AG04450 (cell line): ENCODE measurements at regions of chr6 and their contacts with region 1.

Region 1: GRCh38 chr6:152897799-152898399 is 84.9 kb downstream of the FBXO5 start:
- DNase-seq: peak; percentile 18
- H3K4me3 ChIP-seq: no peak overlapping the region
- H3K27ac ChIP-seq: no peak overlapping the region
- H3K27me3 ChIP-seq: no peaks in the 10 kb centered on the region
- CTCF ChIP-seq: peak; percentile 93

Region 2: GRCh38 chr6:152750694-152751093 is 147.2 kb before region 1 on chr6 and contains the start of gene VIP:
- CTCF ChIA-PET with region 1: interaction called, 14 read pairs
- POLR2A ChIA-PET with region 1: no interaction called
- DNase-seq: no peak
- H3K4me3 ChIP-seq: no peak within 1 kb of the TSS
- H3K27ac ChIP-seq: no peak within 1 kb of the TSS
- H3K27me3 ChIP-seq: no peaks in the 10 kb centered on the region
- CTCF ChIP-seq: no peak
- polyA plus RNA-seq, gene VIP: not detected in 2 replicates

Region 3: DNA sequence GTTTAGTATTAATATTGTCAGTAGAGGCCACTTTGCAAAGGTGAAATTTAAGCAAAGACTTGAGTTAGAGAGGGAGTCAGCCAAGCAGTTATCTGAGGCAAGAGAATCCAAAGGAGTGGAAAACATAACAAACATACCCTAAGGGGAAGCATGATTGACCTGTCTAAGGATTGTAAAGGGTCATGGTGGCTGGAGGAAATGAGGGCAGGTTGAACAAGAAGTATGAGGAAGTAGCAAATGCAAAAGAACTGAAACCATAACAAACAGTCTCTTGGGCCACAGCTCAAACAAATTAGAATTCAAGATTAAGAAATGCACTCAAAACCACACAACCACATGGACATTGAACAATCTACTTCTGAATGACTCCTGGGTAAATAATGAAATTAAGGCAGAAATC is 18.2 kb before region 1 on chr6:
- CTCF ChIA-PET with region 1: no interaction called
- POLR2A ChIA-PET with region 1: no interaction called
- DNase-seq: no peak
- H3K4me3 ChIP-seq: no peak overlapping the region
- H3K27ac ChIP-seq: no peak overlapping the region
- H3K27me3 ChIP-seq: no peaks in the 10 kb centered on the region
- CTCF ChIP-seq: no peak